WTC11 (cell line): ENCODE measurements at regions of chr11 and their contacts with region 1.

Region 1: GRCh38 chr11:45354976-45355705 is 69.0 kb upstream of the SYT13 start:
- DNase-seq: peak; percentile 86
- ATAC-seq: peak; percentile 92
- H3K4me3 Mint-ChIP-seq: peak overlapping the region; percentile 71
- H3K27ac Mint-ChIP-seq: peak overlapping the region; percentile 59
- H3K4me1 Mint-ChIP-seq: peaks cover 46% of the 10 kb centered on the region
- H3K27me3 Mint-ChIP-seq: peaks cover 9% of the 10 kb centered on the region; the same call in 1 of the 2 replicates
- CTCF ChIP-seq: no peak

Region 2: DNA sequence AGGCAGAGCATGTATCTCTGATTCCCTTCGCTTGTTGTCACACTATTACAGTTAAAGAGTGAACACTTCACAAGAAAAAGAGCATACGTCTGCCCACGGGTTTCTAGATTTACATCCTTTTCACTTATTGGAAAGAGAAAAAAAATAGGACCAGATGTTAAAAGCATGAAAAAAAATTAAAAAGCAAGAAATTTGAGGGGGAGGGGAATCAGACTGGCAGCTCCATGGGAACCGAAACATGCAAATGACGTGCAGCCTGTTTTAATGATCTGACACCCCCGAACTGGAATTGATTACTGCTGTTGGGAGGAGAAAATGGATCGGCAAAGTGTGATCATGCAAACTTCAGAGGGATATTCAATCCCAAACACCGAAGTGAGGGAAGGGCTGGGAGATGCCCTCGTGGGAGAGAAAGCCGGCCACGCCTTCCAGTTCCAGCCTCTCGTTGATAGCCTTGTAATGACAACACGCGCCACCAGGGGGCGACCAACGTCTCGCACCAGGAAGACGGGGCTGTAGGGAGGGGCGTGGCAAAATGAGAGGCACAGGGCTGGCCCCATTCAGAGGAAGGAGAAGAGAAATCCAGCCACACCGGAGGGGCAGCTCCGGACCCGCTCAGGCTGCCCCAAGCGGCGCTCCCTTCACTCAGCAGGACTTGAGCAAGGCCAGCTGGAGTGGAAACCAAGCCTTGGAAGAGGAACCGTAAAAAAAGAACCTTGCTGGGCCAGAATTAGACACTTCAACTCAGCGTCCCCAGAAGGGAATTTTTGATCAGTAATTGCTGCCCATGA is 15.2 kb before region 1 on chr11:
- CTCF ChIA-PET with region 1: interaction called, 23 read pairs
- POLR2A ChIA-PET with region 1: no interaction called
- DNase-seq: peak; percentile 98
- ATAC-seq: peak; percentile 99
- H3K4me3 Mint-ChIP-seq: peak overlapping the region; percentile 58
- H3K27ac Mint-ChIP-seq: peak overlapping the region; percentile 26; the same call in 1 of the 2 replicates
- H3K4me1 Mint-ChIP-seq: peaks cover 40% of the 10 kb centered on the region
- H3K27me3 Mint-ChIP-seq: no peaks in the 10 kb centered on the region; the same call in 1 of the 2 replicates
- CTCF ChIP-seq: peak; percentile 95